PC-3 (cell line): ENCODE measurements at regions of chr7 and their contacts with region 1.

Region 1: GRCh38 chr7:106623853-106624252 is 37.1 kb downstream of the CCDC71L start:
- DNase-seq: peak; percentile 93
- ATAC-seq: peak; percentile 93
- H3K4me3 ChIP-seq: no peak overlapping the region
- H3K27ac ChIP-seq: peak overlapping the region; percentile 75
- H3K4me1 ChIP-seq: peaks cover 66% of the 10 kb centered on the region
- H3K27me3 ChIP-seq: no peaks in the 10 kb centered on the region
- CTCF ChIP-seq: no peak

Region 2: GRCh38 chr7:106542550-106543220 is 81.2 kb before region 1 on chr7:
- CTCF ChIA-PET with region 1: no interaction called
- POLR2A ChIA-PET with region 1: interaction called, 12 read pairs
- intact Hi-C with region 1: loop called (anchors 1 kb)
- DNase-seq: peak; percentile 85
- ATAC-seq: peak; percentile 87
- H3K4me3 ChIP-seq: no peak overlapping the region
- H3K27ac ChIP-seq: no peak overlapping the region
- H3K4me1 ChIP-seq: peaks cover 20% of the 10 kb centered on the region
- H3K27me3 ChIP-seq: no peaks in the 10 kb centered on the region
- CTCF ChIP-seq: peak; percentile 87

Region 3: GRCh38 chr7:106598663-106599342 is 25.1 kb before region 1 on chr7:
- CTCF ChIA-PET with region 1: no interaction called
- POLR2A ChIA-PET with region 1: no interaction called
- intact Hi-C with region 1: loop called (anchors 2 kb)
- DNase-seq: peak; percentile 80
- ATAC-seq: peak; percentile 96
- H3K4me3 ChIP-seq: 0 out of 2 replicates have a peak overlapping the region, but pooled peaks have one; percentile 13
- H3K27ac ChIP-seq: peak overlapping the region; percentile 80
- H3K4me1 ChIP-seq: peaks cover 17% of the 10 kb centered on the region
- H3K27me3 ChIP-seq: no peaks in the 10 kb centered on the region
- CTCF ChIP-seq: no peak

Region 4: GRCh38 chr7:106683941-106684340 is 60.1 kb after region 1 on chr7:
- CTCF ChIA-PET with region 1: no interaction called
- POLR2A ChIA-PET with region 1: no interaction called
- intact Hi-C with region 1: no loop called
- DNase-seq: no peak
- ATAC-seq: no peak
- H3K4me3 ChIP-seq: no peak overlapping the region
- H3K27ac ChIP-seq: no peak overlapping the region
- H3K4me1 ChIP-seq: peaks cover 10% of the 10 kb centered on the region
- H3K27me3 ChIP-seq: no peaks in the 10 kb centered on the region
- CTCF ChIP-seq: no peak

Region 5: DNA sequence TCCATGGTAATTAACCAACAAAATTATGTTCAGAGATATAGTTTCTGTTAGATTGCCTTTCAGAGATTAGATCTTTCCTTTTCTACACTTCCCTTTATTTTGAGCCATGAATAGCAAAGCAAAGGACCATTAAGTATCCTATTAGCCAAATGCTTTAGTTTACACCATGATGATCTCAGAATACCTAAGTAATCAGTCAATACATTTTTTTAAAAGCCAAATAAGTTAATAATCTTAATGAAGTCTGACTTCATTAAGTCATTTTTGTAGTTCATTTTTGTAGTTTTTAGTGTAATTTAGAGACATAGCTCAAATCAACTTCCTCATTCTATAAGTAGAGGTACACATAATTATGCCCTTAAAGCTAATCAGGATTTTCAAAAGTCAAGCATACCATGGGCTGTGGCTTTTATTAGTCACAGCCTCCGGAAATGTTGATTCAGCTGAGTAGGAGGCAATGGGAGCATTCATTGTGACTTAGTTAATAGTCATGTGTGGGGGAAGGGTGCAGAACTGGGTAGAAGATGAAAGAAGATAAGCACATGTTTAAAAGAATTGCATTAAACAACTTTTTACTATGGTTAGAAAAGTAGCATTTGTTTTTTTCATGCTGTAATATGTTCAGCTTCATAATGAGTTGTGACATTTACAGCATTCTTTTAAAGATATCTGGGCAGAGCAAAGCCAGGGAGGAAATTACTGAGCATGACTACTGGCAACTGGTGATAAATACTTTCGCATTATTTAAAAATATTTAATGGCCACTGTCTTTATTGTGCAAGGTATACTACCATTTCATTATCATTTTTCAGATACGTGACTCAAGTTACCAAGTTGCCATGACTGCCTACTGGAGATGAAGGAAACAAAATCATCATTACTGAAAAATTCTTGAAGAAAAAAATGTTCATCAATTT is 94.4 kb after region 1 on chr7:
- CTCF ChIA-PET with region 1: no interaction called
- POLR2A ChIA-PET with region 1: no interaction called
- intact Hi-C with region 1: loop called (anchors 5 kb)
- DNase-seq: peak; percentile 96
- ATAC-seq: peak; percentile 98
- H3K4me3 ChIP-seq: peak overlapping the region; percentile 22; the same call in 1 of the 2 replicates
- H3K27ac ChIP-seq: peak overlapping the region; percentile 91
- H3K4me1 ChIP-seq: peaks cover 26% of the 10 kb centered on the region
- H3K27me3 ChIP-seq: no peaks in the 10 kb centered on the region
- CTCF ChIP-seq: no peak